Activated CD4-positive, alpha-beta T cell treated with anti-CD3 and anti-CD28 coated beads, Interleukin-2, amount 10 ng/mL, durations not matched to agents 7 days and 5 days (primary cell): ENCODE measurements at regions of chr12 and their contacts with region 1.

Region 1: DNA sequence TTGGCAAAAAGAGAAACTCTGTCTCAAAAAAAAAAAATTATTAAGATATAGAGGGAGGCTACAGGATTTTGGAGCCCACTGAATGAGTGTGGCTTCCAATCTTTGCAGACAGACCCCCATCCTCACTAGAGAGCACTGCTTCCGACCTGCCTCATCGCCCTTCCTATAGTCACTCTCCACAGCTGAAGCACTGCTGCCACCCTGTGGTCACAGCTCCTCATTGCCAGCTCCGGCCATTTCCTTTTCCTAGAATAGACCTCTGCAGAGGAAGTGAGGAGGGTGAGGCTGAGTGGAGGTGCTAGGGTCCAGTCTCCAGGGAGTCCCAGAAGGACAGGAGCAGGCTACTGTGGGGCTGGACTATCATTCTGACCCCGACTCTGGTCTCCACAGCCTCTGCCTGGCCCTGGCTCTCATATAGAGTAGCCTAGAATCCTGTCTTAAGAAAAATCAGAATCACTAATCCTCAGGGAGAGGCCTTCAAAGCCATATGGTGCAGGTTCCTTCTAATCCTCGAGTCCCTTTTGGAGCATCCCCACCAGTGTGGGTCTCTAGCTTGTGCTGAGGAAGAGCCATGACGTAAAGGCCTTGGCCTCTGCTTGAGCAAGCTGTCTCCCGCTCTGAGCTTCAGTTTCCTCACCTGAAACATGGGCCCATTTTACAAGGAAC is 1.4 kb upstream of the NPFF start:
- DNase-seq: peak; percentile 87
- H3K4me3 Mint-ChIP-seq: no peak overlapping the region
- H3K27ac Mint-ChIP-seq: peak overlapping the region; percentile 57
- H3K4me1 Mint-ChIP-seq: peaks cover 14% of the 10 kb centered on the region
- H3K27me3 Mint-ChIP-seq: no peaks in the 10 kb centered on the region

Region 2: DNA sequence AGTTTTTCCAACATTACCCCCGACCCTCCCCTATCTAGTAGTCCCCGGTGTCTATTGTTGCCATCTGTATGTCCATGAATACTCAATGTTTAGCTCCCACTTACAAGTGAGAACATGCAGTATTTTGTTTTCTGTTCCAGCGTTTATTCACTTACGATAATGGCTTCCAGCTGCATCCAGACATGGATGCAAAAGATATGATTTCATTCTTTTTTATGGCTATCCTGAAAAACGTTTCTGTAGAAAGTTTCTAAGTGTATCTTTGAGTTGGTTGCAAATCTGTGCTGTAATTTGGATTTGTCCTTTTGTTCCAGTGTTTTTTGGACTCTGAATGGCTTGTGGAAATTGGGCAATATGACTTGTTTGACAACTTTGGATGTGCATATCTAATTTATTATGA is 116.9 kb before region 1 on chr12:
- CTCF ChIA-PET with region 1: no interaction called
- POLR2A ChIA-PET with region 1: no interaction called
- DNase-seq: no peak
- H3K4me3 Mint-ChIP-seq: no peak overlapping the region
- H3K27ac Mint-ChIP-seq: no peak overlapping the region
- H3K4me1 Mint-ChIP-seq: peaks cover 47% of the 10 kb centered on the region
- H3K27me3 Mint-ChIP-seq: no peaks in the 10 kb centered on the region

Region 3: GRCh38 chr12:53476769-53477209 is 31.9 kb before region 1 on chr12:
- CTCF ChIA-PET with region 1: interaction called, 20 read pairs
- POLR2A ChIA-PET with region 1: interaction called, 9 read pairs
- DNase-seq: no peak
- H3K4me3 Mint-ChIP-seq: no peak overlapping the region
- H3K27ac Mint-ChIP-seq: no peak overlapping the region
- H3K4me1 Mint-ChIP-seq: peaks cover 32% of the 10 kb centered on the region
- H3K27me3 Mint-ChIP-seq: no peaks in the 10 kb centered on the region

Region 4: DNA sequence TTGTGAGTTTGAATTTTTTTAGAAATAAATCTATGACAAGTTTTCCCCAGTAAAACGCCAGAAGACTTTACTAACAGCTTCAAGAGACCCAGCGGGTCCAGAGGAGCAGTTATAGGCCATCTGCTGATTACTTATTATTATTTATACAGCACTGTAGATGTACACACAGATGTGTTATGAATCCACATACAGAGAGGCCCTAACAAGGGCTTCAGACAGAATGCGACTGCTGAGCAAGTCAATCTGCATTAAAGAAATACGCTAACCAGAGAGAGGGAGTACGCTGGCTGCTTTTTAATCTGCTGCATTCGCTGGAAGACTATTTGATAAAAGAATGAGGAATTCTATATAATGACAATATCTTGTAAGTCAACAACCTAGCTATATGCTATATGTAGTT is 85.0 kb after region 1 on chr12:
- CTCF ChIA-PET with region 1: no interaction called
- POLR2A ChIA-PET with region 1: no interaction called
- DNase-seq: no peak
- H3K4me3 Mint-ChIP-seq: no peak overlapping the region
- H3K27ac Mint-ChIP-seq: no peak overlapping the region
- H3K4me1 Mint-ChIP-seq: peaks cover 8% of the 10 kb centered on the region
- H3K27me3 Mint-ChIP-seq: no peaks in the 10 kb centered on the region